ENCODE measurements at regions of chr18 and their contacts with region 1.

Region 1: DNA sequence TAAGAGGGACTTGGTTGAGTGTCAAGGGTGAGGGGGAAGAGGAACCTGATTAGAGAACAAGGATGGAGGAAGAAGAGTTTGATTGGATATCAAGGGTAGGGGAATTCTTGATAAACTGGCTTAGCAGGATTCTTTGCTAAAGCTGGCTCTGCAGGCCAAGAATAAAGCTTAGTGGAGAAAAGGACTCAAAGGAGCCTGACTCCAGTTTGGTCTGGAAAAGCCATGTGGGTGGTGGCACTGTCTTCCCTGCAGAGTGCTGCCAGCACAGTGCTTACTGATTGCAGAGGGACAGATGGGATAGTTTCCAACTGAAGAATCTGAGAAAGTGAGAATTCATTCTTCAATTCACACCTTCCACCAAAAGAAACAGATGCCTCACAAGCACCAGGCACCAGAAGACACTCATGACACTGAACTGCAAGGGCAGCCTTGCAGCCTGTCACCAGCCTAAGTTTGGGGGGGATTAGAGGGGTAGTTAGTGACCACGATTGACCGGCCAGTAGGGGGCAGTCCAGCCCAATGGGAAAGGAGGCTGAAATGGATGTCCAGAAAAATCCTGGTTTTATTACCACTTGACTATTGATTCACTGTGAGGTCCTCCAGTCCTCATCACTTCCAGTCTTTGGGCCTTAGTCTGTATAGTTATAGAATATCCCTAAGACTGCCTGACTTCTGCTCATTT is 334.5 kb downstream of the SMAD2 start:
- DNase-seq: peak in 1 of 2 experiments; percentile 86
- H3K4me3 ChIP-seq: no peak overlapping the region
- H3K27ac ChIP-seq: no peak overlapping the region
- H3K4me1 ChIP-seq: peaks cover 0 to 11% (median 2%) of the 10 kb centered on the region in 4 experiments; a peak in 5 of 7 replicates
- H3K27me3 ChIP-seq: no peaks in the 10 kb centered on the region
- CTCF ChIP-seq: peak; percentile 76 to 94 (median 83)
- EP300 ChIP-seq: no peak
- POLR2A ChIP-seq: no peak
- RAD21 ChIP-seq: peak; percentile 89 to 94

Region 2: DNA sequence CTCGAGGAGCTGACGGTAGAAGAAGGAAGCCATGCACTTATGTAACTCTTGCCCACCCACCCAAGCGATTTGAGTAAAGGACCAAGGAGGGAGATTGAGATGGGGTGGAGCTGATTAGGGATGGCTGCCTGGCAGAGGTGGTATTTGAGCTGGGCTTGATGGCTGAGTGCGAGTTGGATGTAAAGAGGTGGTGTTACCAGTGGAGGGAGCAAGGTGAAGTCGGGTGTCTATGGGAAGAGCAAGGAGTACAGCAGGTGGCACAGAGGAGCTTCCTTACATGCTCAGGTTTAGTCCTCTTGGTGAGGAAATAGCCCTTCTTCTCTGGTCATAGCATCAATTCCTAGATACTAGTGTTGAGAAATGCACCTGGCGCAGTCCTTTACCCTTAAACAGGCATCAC is 50.3 kb before region 1 on chr18:
- CTCF ChIA-PET with region 1: interaction called, 19 read pairs
- POLR2A ChIA-PET with region 1: no interaction called
- DNase-seq: peak in 1 of 2 experiments; percentile 38
- H3K4me3 ChIP-seq: no peak overlapping the region
- H3K27ac ChIP-seq: no peak overlapping the region
- H3K4me1 ChIP-seq: no peaks in the 10 kb centered on the region
- H3K27me3 ChIP-seq: no peaks in the 10 kb centered on the region; a peak in 1 of 7 replicates
- CTCF ChIP-seq: peak; percentile 67 to 83 (median 72)
- EP300 ChIP-seq: no peak
- POLR2A ChIP-seq: no peak
- RAD21 ChIP-seq: peak; percentile 62 to 74

Region 3: GRCh38 chr18:47577520-47577919 is 18.4 kb before region 1 on chr18:
- CTCF ChIA-PET with region 1: interaction called, 13 read pairs
- POLR2A ChIA-PET with region 1: interaction called, 3 read pairs
- DNase-seq: no peak
- H3K4me3 ChIP-seq: no peak overlapping the region
- H3K27ac ChIP-seq: no peak overlapping the region
- H3K4me1 ChIP-seq: peaks cover 3 to 9% (median 6%) of the 10 kb centered on the region in 4 experiments
- H3K27me3 ChIP-seq: no peaks in the 10 kb centered on the region; a peak in 1 of 7 replicates
- CTCF ChIP-seq: no peak
- EP300 ChIP-seq: no peak
- POLR2A ChIP-seq: no peak
- RAD21 ChIP-seq: no peak

Region 4: GRCh38 chr18:47615043-47615442 is 19.1 kb after region 1 on chr18:
- CTCF ChIA-PET with region 1: interaction called, 12 read pairs
- POLR2A ChIA-PET with region 1: no interaction called
- DNase-seq: no peak
- H3K4me3 ChIP-seq: no peak overlapping the region
- H3K27ac ChIP-seq: no peak overlapping the region
- H3K4me1 ChIP-seq: peaks cover 0 to 3% (median 0%) of the 10 kb centered on the region in 4 experiments; a peak in 1 of 7 replicates
- H3K27me3 ChIP-seq: no peaks in the 10 kb centered on the region
- CTCF ChIP-seq: no peak
- EP300 ChIP-seq: no peak
- POLR2A ChIP-seq: no peak
- RAD21 ChIP-seq: no peak